Calu3 (cell line): ENCODE measurements at regions of chr10 and their contacts with region 1.

Region 1: DNA sequence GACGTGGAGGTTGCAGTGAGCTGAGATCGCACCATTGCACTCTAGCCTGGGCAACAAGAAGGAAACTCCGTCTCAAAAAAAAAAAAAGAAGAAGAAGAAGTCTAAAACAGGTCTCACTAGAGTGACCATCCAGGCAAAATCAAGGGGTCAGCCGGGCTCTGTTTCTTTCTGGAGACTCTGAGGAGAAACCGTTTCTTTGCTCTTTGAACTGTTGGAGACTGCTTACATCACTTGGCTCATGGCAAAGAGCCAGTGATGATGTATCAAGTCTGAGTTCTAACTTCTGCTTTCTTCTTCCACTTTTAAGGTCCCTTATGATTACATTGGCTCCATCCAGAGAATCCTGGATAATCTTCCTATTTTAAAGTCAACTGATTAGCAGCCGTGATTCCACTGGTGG is 306.8 kb downstream of the WDR11 start:
- DNase-seq: peak; percentile 40
- H3K4me3 Mint-ChIP-seq: peak overlapping the region; percentile 47
- H3K27ac Mint-ChIP-seq: no peak overlapping the region
- H3K4me1 Mint-ChIP-seq: peaks cover 45% of the 10 kb centered on the region
- H3K27me3 Mint-ChIP-seq: no peaks in the 10 kb centered on the region
- CTCF ChIP-seq: no peak

Region 2: GRCh38 chr10:120948889-120949608 is 208.9 kb before region 1 on chr10:
- CTCF ChIA-PET with region 1: no interaction called
- intact Hi-C with region 1: loop called (anchors 1 kb)
- DNase-seq: peak; percentile 80
- H3K4me3 Mint-ChIP-seq: no peak overlapping the region
- H3K27ac Mint-ChIP-seq: no peak overlapping the region
- H3K4me1 Mint-ChIP-seq: peaks cover 20% of the 10 kb centered on the region
- H3K27me3 Mint-ChIP-seq: no peaks in the 10 kb centered on the region
- CTCF ChIP-seq: peak; percentile 58

Region 3: DNA sequence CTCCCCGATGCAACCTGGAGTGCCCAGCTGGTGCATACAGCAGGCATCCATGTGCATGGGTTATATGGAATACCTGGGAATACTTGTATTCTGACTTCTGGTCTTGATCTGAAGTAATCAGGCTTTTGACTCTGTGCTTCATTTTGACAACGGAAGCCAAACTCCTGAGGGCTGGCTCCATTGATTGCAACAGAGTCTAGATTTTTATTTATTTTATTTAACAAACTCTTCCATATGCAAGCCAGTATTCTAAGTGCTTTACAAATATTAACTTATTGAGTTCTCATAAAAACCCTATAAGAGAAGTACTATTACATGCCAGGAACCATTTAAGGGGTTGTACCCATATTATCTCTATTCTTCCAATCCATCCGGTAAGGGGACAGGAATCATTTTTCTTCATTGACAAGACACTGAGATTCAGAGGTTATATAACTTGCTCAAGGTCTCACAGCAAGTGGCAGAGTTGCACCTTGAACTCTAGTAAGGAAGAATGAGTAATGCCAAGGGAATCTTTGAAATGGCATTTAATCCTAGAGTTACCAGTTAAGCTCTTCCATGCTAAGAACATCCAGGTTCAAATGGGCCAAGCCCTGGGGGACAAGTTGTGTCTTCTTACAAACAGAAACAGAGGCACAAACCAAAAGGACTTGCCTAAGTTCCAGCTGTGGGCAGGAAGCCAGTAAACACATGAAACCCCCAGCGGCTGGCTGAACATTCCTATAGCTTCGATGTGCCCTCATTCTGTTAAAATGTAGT is 65.9 kb before region 1 on chr10:
- CTCF ChIA-PET with region 1: no interaction called
- intact Hi-C with region 1: loop called (anchors 5 kb)
- DNase-seq: peak; percentile 27
- H3K4me3 Mint-ChIP-seq: no peak overlapping the region
- H3K27ac Mint-ChIP-seq: peak overlapping the region; percentile 44
- H3K4me1 Mint-ChIP-seq: peaks cover 11% of the 10 kb centered on the region
- H3K27me3 Mint-ChIP-seq: no peaks in the 10 kb centered on the region
- CTCF ChIP-seq: no peak

Region 4: DNA sequence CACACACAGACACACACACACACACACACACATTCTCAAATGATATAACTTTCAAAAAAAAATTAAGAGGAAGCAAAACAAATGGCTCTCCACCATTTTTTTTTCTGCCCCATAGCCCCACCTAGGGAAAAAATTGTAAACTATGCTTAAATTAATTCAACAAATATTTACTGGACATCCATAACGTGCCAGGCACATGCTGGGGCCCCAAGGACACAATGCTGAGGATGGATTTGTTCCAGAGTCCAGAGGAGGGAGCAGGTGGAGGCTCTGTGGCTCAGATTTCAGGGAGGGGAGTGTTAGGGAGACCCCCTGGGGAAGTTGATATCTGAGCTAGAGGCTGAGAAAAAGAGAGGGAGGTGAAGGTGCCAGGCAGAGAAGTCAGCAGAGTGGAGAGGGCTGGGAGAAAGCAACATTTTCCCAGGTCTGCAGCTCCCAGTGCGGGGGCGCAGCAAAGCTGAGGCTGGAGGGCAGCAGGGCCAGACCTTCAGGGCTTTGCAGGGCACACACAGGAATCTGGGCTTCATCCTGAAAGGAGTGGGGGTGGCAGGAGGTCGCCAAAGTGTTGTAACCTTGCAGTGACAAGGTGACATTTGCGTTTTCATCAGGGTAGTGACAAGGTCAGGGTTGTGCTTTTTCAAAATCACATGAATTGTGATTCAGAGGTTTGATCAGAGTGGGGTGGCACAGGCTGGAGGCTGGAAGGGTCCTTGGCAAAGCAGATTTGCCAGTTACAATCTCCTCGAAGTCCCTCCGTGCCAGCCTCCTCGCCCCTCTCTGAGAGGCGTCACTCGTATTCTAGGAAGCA is 45.2 kb before region 1 on chr10:
- CTCF ChIA-PET with region 1: interaction called, 3 read pairs
- intact Hi-C with region 1: loop called (anchors 5 kb)
- DNase-seq: peak; percentile 1
- H3K4me3 Mint-ChIP-seq: peak overlapping the region; percentile 5
- H3K27ac Mint-ChIP-seq: peak overlapping the region; percentile 42
- H3K4me1 Mint-ChIP-seq: peaks cover 27% of the 10 kb centered on the region
- H3K27me3 Mint-ChIP-seq: no peaks in the 10 kb centered on the region
- CTCF ChIP-seq: no peak

Region 5: GRCh38 chr10:121324678-121325213 is 166.7 kb after region 1 on chr10:
- CTCF ChIA-PET with region 1: no interaction called
- intact Hi-C with region 1: loop called (anchors 1 kb)
- DNase-seq: peak; percentile 69
- H3K4me3 Mint-ChIP-seq: peak overlapping the region; percentile 36
- H3K27ac Mint-ChIP-seq: peak overlapping the region; percentile 90
- H3K4me1 Mint-ChIP-seq: peaks cover 41% of the 10 kb centered on the region
- H3K27me3 Mint-ChIP-seq: no peaks in the 10 kb centered on the region
- CTCF ChIP-seq: no peak

Region 6: GRCh38 chr10:121406823-121407545 is 249.0 kb after region 1 on chr10:
- CTCF ChIA-PET with region 1: no interaction called
- intact Hi-C with region 1: loop called (anchors 2 kb)
- DNase-seq: peak; percentile 17
- H3K4me3 Mint-ChIP-seq: no peak overlapping the region
- H3K27ac Mint-ChIP-seq: peak overlapping the region; percentile 46
- H3K4me1 Mint-ChIP-seq: peaks cover 56% of the 10 kb centered on the region
- H3K27me3 Mint-ChIP-seq: no peaks in the 10 kb centered on the region
- CTCF ChIP-seq: no peak